Naive thymus-derived CD4-positive, alpha-beta T cell (primary cell): ENCODE measurements at regions of chr6 and their contacts with region 1.

Region 1: DNA sequence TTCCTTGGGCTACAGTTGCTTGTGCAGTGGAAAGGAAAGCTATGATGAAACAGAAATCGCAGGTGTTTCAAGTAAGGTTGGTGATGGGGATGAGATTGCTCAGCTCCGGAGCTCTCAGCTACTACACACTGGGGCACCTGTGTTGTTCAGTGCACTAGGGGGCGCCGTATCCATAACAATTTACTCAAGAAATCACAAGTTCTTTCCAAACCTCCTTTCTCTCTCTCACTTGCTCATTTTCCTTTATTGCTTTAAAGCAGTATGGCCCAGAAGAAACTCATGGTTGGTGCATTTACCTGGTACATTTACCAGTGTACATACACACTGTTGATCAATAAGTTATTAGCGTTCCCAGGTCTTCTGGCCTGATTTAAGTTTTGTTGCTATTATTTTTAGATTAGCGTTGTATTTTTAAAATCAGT is 235.2 kb upstream of the TAB2 start:
- DNase-seq: peak; percentile 59 to 84 (median 76)
- ATAC-seq: peak; percentile 97
- H3K4me3 ChIP-seq: no peak overlapping the region
- H3K4me3 Mint-ChIP-seq: peak overlapping the region in 2 of 10 donors; percentile 18 to 72
- H3K27ac ChIP-seq: no peak overlapping the region
- H3K27ac Mint-ChIP-seq: peak overlapping the region in 5 of 9 donors; percentile 4 to 90 (median 52)
- H3K4me1 ChIP-seq: peaks cover 16 to 25% of the 10 kb centered on the region in 2 donors
- H3K4me1 Mint-ChIP-seq: peaks cover 10 to 88% (median 39%) of the 10 kb centered on the region in 7 donors
- H3K27me3 ChIP-seq: no peaks in the 10 kb centered on the region
- H3K27me3 Mint-ChIP-seq: no peaks in the 10 kb centered on the region

Region 2: GRCh38 chr6:148671085-148671484 is 411.2 kb before region 1 on chr6:
- CTCF ChIA-PET with region 1: no interaction called
- POLR2A ChIA-PET with region 1: no interaction called
- intact Hi-C with region 1: no loop called
- DNase-seq: no peak
- ATAC-seq: no peak
- H3K4me3 ChIP-seq: no peak overlapping the region
- H3K4me3 Mint-ChIP-seq: no peak overlapping the region
- H3K27ac ChIP-seq: no peak overlapping the region
- H3K27ac Mint-ChIP-seq: no peak overlapping the region
- H3K4me1 ChIP-seq: no peaks in the 10 kb centered on the region
- H3K4me1 Mint-ChIP-seq: peaks cover 0 to 3% (median 0%) of the 10 kb centered on the region in 7 donors
- H3K27me3 ChIP-seq: no peaks in the 10 kb centered on the region
- H3K27me3 Mint-ChIP-seq: peaks cover 0 to 12% (median 6%) of the 10 kb centered on the region in 5 donors

Region 3: GRCh38 chr6:149094156-149094555 is 11.9 kb after region 1 on chr6:
- CTCF ChIA-PET with region 1: interaction called, 4 read pairs
- POLR2A ChIA-PET with region 1: interaction called, 4 read pairs
- intact Hi-C with region 1: loop called (anchors 1 kb)
- DNase-seq: no peak
- ATAC-seq: no peak
- H3K4me3 ChIP-seq: no peak overlapping the region
- H3K4me3 Mint-ChIP-seq: peak overlapping the region; percentile 13 to 85 (median 66)
- H3K27ac ChIP-seq: peak overlapping the region; percentile 32
- H3K27ac Mint-ChIP-seq: peak overlapping the region; percentile 13 to 98 (median 82)
- H3K4me1 ChIP-seq: peaks cover 26 to 36% of the 10 kb centered on the region in 2 donors
- H3K4me1 Mint-ChIP-seq: peaks cover 25 to 75% (median 52%) of the 10 kb centered on the region in 7 donors
- H3K27me3 ChIP-seq: no peaks in the 10 kb centered on the region
- H3K27me3 Mint-ChIP-seq: no peaks in the 10 kb centered on the region

Region 4: GRCh38 chr6:149140137-149140909 is 58.0 kb after region 1 on chr6:
- CTCF ChIA-PET with region 1: no interaction called
- POLR2A ChIA-PET with region 1: interaction called, 3 read pairs
- intact Hi-C with region 1: loop called in 1 of 2 experiments (anchors 1 kb)
- DNase-seq: peak; percentile 7 to 67 (median 27)
- ATAC-seq: peak; percentile 82
- H3K4me3 ChIP-seq: peak overlapping the region; percentile 14
- H3K4me3 Mint-ChIP-seq: peak overlapping the region; percentile 17 to 89 (median 78)
- H3K27ac ChIP-seq: peak overlapping the region; percentile 88
- H3K27ac Mint-ChIP-seq: peak overlapping the region in 8 of 9 donors; percentile 95 to 100 (median 98)
- H3K4me1 ChIP-seq: peaks cover 12 to 27% of the 10 kb centered on the region in 2 donors
- H3K4me1 Mint-ChIP-seq: peaks cover 20 to 61% (median 44%) of the 10 kb centered on the region in 7 donors
- H3K27me3 ChIP-seq: no peaks in the 10 kb centered on the region
- H3K27me3 Mint-ChIP-seq: no peaks in the 10 kb centered on the region

Region 5: DNA sequence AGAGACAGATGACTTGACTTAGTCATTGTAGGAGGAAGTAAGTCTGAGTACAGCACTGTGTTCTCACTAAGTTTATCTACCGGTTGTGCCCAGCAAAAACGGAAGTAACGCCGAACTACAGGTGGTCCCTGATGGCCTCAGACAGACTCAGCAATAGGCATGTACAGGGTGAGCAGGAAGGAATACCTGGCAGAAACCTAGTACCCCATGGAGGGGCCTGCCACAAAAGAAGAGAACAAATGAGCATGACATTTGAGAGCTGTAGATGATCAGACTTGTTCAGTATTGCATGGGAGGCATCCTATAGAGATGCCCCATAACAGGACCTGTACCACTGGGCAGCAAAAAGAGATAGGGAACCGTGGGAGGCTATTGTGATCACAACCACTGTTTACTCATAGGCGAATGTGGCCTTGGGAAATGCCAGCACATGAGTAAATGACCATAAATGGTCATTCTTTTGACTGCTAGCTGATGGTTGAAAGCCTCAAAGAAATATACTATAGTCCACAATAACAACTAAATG is 128.8 kb after region 1 on chr6:
- CTCF ChIA-PET with region 1: no interaction called
- POLR2A ChIA-PET with region 1: no interaction called
- intact Hi-C with region 1: loop called in 1 of 2 experiments (anchors 2 kb)
- DNase-seq: peak in 1 of 9 donors; percentile 34
- ATAC-seq: peak; percentile 71
- H3K4me3 ChIP-seq: no peak overlapping the region
- H3K4me3 Mint-ChIP-seq: peak overlapping the region in 8 of 10 donors; percentile 15 to 70 (median 46)
- H3K27ac ChIP-seq: no peak overlapping the region
- H3K27ac Mint-ChIP-seq: peak overlapping the region in 5 of 9 donors; percentile 17 to 91 (median 59)
- H3K4me1 ChIP-seq: peaks cover 26 to 34% of the 10 kb centered on the region in 2 donors
- H3K4me1 Mint-ChIP-seq: peaks cover 6 to 28% (median 14%) of the 10 kb centered on the region in 7 donors
- H3K27me3 ChIP-seq: no peaks in the 10 kb centered on the region
- H3K27me3 Mint-ChIP-seq: no peaks in the 10 kb centered on the region

Region 6: GRCh38 chr6:149368065-149368464 is 285.8 kb after region 1 on chr6:
- CTCF ChIA-PET with region 1: interaction called, 3 read pairs
- POLR2A ChIA-PET with region 1: no interaction called
- intact Hi-C with region 1: loop called (anchors 2 to 5 kb)
- DNase-seq: no peak
- ATAC-seq: no peak
- H3K4me3 ChIP-seq: no peak overlapping the region
- H3K4me3 Mint-ChIP-seq: no peak overlapping the region
- H3K27ac ChIP-seq: peak overlapping the region; percentile 21
- H3K27ac Mint-ChIP-seq: no peak overlapping the region
- H3K4me1 ChIP-seq: peaks cover 40 to 57% of the 10 kb centered on the region in 2 donors
- H3K4me1 Mint-ChIP-seq: peaks cover 28 to 44% (median 30%) of the 10 kb centered on the region in 7 donors
- H3K27me3 ChIP-seq: no peaks in the 10 kb centered on the region
- H3K27me3 Mint-ChIP-seq: no peaks in the 10 kb centered on the region